HAP-1 (cell line): ENCODE measurements at regions of chr1 and their contacts with region 1.

Region 1: DNA sequence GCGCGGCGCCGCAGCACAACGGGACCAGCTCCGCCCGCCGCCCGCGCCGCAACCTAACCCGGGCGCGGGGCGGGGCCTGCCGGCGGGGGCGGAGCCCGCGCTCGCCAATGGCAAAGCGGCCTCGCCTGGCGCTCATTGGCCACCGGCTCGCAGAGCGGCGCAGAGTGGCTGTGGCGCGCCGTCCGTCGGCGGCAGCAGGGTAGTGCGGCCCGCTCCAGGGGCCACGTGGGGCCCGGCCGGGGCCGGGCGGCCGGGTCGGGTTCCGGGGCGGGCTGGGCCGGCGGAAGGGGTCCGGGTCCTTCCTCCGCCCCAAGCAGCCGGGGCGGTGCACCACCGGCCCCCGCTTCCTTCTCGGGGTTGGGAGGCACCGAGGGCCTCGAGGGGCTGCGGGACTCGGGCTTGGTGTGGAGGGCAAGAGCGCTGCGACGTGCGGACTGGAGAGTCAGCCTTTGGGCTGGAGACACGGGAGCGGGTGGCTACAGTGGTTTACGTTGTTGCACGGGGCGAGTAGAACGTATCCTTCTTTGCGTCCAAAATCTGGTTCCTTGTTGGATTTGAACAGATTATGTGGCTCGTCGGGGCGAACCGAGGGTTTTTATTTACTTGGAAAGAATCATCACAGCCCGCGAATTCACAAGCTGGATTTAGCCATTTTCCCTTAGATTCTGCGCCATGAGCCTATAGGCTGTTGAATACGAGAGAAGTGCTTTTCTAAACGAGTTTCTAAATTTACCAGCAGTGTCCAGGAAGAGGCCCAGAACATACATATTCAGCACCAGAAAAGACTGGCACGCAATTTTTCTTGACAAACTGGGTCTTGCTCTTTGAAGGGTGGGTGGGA is at the start of gene SRM:
- DNase-seq: peak; percentile 87 to 92
- H3K4me3 ChIP-seq: peak within 1 kb of the TSS; percentile 83
- H3K4me1 ChIP-seq: peaks cover 8% of the 10 kb centered on the region; the same call in 1 of the 2 replicates
- H3K27me3 ChIP-seq: no peaks in the 10 kb centered on the region

Region 2: DNA sequence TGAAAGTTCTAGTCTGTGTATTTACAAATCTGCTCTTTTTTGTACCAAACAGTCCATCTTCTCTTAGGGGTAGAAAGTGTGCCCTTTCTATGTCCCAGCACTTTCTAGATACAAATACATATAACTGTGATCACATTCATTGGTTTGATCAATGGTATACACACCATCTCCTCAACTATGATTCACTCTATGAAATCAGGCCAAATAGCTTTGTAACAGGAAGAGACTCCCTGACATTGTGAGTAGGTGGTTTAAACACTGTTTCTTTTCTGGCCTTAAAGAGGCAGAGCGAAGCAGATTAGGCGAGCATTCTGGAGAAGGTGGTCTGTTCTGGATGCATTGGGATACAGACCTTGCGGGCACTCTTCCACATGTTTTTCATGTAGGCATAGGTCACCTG is 78.7 kb after region 1 on chr1:
- in situ Hi-C with region 1: no loop called
- DNase-seq: no peak
- H3K4me3 ChIP-seq: no peak overlapping the region
- H3K4me1 ChIP-seq: no peaks in the 10 kb centered on the region
- H3K27me3 ChIP-seq: no peaks in the 10 kb centered on the region

Region 3: DNA sequence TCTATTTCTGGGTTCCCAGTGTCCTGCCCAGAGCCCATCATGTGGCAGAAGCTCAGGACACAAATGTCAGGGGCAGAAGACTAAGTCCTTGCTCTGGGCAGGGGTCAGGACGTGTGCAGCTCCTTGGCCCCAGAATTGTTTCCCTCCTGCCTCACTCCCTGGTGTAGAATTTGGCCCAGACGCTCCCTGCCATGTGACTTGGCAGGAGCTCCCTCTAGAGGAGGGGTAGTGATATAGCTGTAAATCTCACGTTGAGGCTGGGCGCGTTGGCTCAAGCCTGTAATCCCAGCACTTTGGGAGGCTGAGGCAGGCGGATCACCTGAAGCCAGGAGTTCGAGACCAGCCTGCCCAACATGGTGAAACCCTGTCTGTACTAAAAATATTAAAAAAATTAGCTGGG is 304.0 kb after region 1 on chr1:
- in situ Hi-C with region 1: no loop called
- DNase-seq: no peak
- H3K4me3 ChIP-seq: no peak overlapping the region
- H3K4me1 ChIP-seq: no peaks in the 10 kb centered on the region
- H3K27me3 ChIP-seq: no peaks in the 10 kb centered on the region; the same call in 1 of the 2 replicates

Region 4: GRCh38 chr1:11629184-11630016 is 569.2 kb after region 1 on chr1:
- in situ Hi-C with region 1: loop called (anchors 10 kb)
- DNase-seq: no peak
- H3K4me3 ChIP-seq: no peak overlapping the region
- H3K4me1 ChIP-seq: no peaks in the 10 kb centered on the region
- H3K27me3 ChIP-seq: peaks cover 20% of the 10 kb centered on the region